Heart left ventricle (tissue), 16 donors: ENCODE measurements at regions of chr19 and their contacts with region 1.

Region 1: GRCh38 chr19:35716801-35717666 is 769 bp upstream of the KMT2B start:
- DNase-seq: peak; percentile 90 to 98 (median 96)
- ATAC-seq: peak; percentile 93 to 96 (median 95)
- H3K4me3 ChIP-seq: peak overlapping the region; percentile 66 to 100 (median 88)
- H3K27ac ChIP-seq: peak overlapping the region; percentile 87 to 98 (median 92)
- H3K4me1 ChIP-seq: peaks cover 3 to 39% (median 22%) of the 10 kb centered on the region in 12 donors
- H3K27me3 ChIP-seq: no peaks in the 10 kb centered on the region
- CTCF ChIP-seq: peak; percentile 86 to 98 (median 91)
- POLR2A ChIP-seq: peak in 1 of 2 donors; percentile 45

Region 2: DNA sequence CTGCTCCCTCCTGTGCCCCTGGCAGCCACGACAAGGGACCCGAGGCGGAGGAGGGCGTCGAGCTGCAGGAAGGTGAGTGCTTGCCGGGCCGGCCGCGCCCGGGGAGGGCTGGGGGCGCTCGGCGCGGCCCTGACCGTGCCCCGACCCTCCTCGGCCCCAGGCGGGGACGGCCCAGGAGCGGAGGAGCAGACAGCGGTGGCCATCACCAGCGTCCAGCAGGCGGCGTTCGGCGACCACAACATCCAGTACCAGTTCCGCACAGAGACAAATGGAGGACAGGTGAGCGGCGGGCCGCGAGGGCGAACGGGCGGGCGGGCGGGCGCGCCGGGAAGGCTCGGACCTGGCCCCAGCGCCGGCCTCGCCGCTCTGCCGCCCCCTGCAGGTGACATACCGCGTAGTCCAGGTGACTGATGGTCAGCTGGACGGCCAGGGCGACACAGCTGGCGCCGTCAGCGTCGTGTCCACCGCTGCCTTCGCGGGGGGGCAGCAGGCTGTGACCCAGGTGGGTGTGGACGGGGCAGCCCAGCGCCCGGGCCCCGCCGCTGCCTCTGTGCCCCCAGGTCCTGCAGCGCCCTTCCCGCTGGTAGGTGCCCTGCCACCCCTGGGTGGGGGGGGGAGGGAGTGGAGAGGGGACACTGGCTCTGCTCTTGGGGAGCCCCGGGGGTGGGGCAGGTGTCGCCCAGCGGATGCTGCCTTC is 447.5 kb before region 1 on chr19:
- intact Hi-C with region 1: loop called in 1 of 10 experiments (anchors 10 kb)
- DNase-seq: peak; percentile 84 to 93 (median 89)
- ATAC-seq: peak; percentile 42 to 60 (median 58)
- H3K4me3 ChIP-seq: peak overlapping the region; percentile 40 to 97 (median 86)
- H3K27ac ChIP-seq: peak overlapping the region; percentile 80 to 99 (median 94)
- H3K4me1 ChIP-seq: peaks cover 3 to 60% (median 29%) of the 10 kb centered on the region in 12 donors
- H3K27me3 ChIP-seq: no peaks in the 10 kb centered on the region
- CTCF ChIP-seq: peak; percentile 61 to 93 (median 84)
- POLR2A ChIP-seq: no peak

Region 3: DNA sequence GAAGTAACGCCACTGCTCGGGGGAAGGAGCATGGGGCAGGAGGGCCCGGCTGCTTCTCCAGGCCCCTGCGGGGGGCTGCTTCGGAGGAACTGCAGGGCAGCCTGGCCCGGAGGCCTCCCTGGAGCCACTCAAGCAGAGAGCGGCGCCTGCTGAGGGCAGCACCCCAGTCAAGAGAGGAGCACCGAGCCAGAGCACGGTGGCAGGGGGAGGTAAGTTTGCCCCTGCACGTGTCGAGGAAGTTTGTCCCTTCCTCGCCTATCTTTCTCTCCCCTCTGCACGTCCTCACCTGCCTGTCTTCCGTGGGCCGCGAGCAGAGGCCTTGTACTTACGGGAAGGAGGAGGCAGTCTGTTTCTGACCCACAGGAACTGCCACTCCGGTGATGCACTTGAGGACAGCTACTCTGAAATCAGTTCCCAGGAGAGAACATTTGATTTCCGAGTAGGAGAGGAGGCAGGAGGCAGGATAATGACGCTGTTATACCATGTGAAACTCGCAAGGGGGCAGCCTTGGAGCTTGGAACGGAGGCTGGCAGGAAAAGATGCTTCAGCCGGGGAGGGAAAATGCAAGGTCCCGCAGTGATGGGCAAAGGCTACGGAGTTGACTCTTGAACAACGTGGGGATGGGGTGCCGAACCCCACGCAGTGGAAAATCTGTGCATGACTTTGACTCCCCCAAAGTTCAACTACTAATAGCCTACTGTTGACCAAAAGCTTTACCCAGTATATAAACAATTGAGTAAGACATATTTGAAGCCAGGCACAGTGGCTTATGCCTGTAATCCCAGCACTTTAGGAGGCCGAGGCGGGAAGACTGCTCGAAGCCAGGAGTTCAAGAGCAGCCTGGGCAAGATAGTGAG is 364.4 kb before region 1 on chr19:
- intact Hi-C with region 1: loop called in 1 of 10 experiments (anchors 10 kb)
- DNase-seq: peak; percentile 56 to 73 (median 68)
- ATAC-seq: peak; percentile 67 to 80 (median 78)
- H3K4me3 ChIP-seq: no peak overlapping the region
- H3K27ac ChIP-seq: no peak overlapping the region
- H3K4me1 ChIP-seq: peaks cover 0 to 16% (median 0%) of the 10 kb centered on the region in 12 donors
- H3K27me3 ChIP-seq: peaks cover 0 to 12% (median 0%) of the 10 kb centered on the region in 9 donors
- CTCF ChIP-seq: peak; percentile 61 to 83 (median 80)
- POLR2A ChIP-seq: no peak

Region 4: DNA sequence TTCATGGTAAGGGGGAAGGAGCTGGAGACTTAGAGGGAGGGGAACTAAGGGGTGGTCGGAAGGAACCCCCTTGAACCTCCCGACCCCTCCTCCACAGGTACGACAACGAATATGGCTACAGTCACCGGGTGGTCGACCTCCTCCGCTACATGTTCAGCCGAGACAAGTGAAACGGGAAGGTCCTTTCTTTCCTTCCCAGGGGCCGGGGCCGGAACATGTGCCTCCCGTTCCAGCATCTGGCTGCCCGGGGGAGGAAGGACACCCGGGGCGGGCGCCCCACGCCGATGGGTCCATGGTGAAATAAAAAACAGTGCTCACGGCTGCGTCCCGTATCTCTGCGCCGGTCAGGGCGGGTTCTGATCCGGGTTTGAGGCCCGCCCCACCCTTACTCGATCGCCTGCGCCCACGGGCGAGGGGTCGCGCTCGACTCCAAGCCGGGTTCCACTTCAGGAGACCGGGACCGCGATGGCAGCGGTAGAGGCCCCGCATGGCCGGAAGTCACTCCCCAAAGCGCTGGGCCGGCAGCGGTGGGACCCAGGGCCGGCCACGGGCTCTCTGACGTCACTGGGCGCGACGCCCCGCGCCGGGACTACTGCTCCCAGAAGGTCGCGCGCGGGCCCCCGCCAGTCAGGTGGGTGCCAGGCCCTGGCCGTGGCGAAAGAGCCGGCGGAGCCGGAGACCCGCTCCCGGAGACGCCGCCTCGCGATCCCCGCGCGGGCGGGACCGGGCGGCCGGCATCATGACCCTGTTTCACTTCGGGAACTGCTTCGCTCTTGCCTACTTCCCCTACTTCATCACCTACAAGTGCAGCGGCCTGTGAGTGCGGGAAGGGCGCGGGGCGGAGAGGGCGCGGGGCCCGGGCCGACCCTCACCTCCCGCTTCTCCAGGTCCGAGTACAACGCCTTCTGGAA is 171.8 kb before region 1 on chr19 and contains the start of gene TMEM147:
- intact Hi-C with region 1: loop called in 9 of 10 experiments (anchors 1 to 10 kb)
- DNase-seq: peak; percentile 94 to 97 (median 95)
- ATAC-seq: peak; percentile 96 to 99 (median 98)
- H3K4me3 ChIP-seq: peak within 1 kb of the TSS; percentile 63 to 99 (median 88)
- H3K27ac ChIP-seq: peak within 1 kb of the TSS; percentile 8 to 87 (median 76)
- H3K4me1 ChIP-seq: peaks cover 4 to 30% (median 17%) of the 10 kb centered on the region in 12 donors
- H3K27me3 ChIP-seq: no peaks in the 10 kb centered on the region
- CTCF ChIP-seq: peak in 1 of 12 donors; percentile 11
- POLR2A ChIP-seq: peak in 1 of 2 donors; percentile 76
- total RNA-seq, gene TMEM147: 68.9 to 121 (median 81.6) TPM

Region 5: DNA sequence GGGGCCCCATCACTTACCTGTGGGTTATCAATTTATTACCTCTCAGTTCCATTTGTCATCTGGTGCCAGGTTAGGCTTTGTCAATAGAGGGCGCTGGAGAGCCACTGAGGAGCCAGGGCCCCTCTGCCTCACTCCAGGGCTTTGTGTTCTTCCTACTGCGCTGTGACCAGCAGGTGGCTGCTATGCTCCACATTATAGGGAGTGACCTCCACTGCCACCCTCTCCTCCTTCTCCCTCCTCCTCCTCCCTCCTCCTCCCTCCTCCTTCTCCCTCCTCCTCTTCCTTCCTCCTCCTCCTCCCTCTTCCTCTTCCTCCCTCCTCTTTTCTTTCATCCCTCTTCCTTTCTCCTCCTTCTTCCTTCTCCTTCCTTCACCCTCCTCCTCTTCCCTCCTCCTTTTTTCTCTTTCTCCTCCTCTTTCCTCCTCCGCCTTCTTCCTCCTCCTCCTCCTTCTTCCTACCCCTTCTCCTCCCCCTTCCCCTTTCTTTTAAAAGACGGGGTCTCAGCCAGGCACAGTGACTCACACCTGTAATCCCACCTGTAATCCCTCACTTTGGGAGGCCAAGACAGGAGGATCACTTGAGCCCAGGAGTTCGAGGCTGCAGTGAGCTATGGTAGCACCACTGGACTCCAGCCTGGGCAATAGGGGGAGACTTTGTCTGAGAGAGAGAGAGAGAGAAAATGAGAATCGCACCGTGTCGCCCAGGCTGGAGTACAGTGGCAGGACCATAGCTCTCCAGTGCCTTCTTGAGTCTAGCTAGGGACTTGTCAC is 23.0 kb before region 1 on chr19:
- intact Hi-C with region 1: loop called in 9 of 10 experiments (anchors 1 to 2 kb)
- DNase-seq: peak; percentile 82 to 91 (median 86)
- ATAC-seq: peak; percentile 98 to 100 (median 100)
- H3K4me3 ChIP-seq: no peak overlapping the region
- H3K27ac ChIP-seq: no peak overlapping the region
- H3K4me1 ChIP-seq: peaks cover 0 to 4% (median 0%) of the 10 kb centered on the region in 12 donors
- H3K27me3 ChIP-seq: no peaks in the 10 kb centered on the region
- CTCF ChIP-seq: peak; percentile 94 to 100 (median 96)
- POLR2A ChIP-seq: no peak

Region 6: GRCh38 chr19:35702223-35703012 is 14.6 kb before region 1 on chr19:
- intact Hi-C with region 1: loop called in 4 of 10 experiments (anchors 1 to 2 kb)
- DNase-seq: peak; percentile 95 to 98 (median 96)
- ATAC-seq: peak; percentile 100
- H3K4me3 ChIP-seq: peak overlapping the region; percentile 10 to 80 (median 64)
- H3K27ac ChIP-seq: peak overlapping the region in 7 of 12 donors; percentile 31 to 79 (median 46)
- H3K4me1 ChIP-seq: peaks cover 0 to 13% (median 4%) of the 10 kb centered on the region in 12 donors
- H3K27me3 ChIP-seq: peaks cover 0 to 16% (median 0%) of the 10 kb centered on the region in 9 donors
- CTCF ChIP-seq: no peak
- POLR2A ChIP-seq: peak in 1 of 2 donors; percentile 64

Region 7: GRCh38 chr19:35748106-35749020 is 31.3 kb after region 1 on chr19 and contains the start of gene LIN37:
- intact Hi-C with region 1: loop called in 2 of 10 experiments (anchors 2 kb)
- DNase-seq: peak; percentile 98 to 100 (median 99)
- ATAC-seq: peak; percentile 83 to 90 (median 88)
- H3K4me3 ChIP-seq: peak within 1 kb of the TSS; percentile 64 to 95 (median 86)
- H3K27ac ChIP-seq: peak within 1 kb of the TSS in 11 of 12 donors; percentile 64 to 94 (median 80)
- H3K4me1 ChIP-seq: peaks cover 10 to 54% (median 32%) of the 10 kb centered on the region in 12 donors
- H3K27me3 ChIP-seq: no peaks in the 10 kb centered on the region
- CTCF ChIP-seq: peak in 6 of 12 donors; percentile 13 to 54 (median 20)
- POLR2A ChIP-seq: peak; percentile 94 to 98
- total RNA-seq, gene LIN37: 3.7 to 12.2 (median 7.6) TPM